Activated naive CD4-positive, alpha-beta T cell treated with anti-CD3 and anti-CD28 coated beads for 36 hours (primary cell): ENCODE measurements at regions of chr10 and their contacts with region 1.

Region 1: DNA sequence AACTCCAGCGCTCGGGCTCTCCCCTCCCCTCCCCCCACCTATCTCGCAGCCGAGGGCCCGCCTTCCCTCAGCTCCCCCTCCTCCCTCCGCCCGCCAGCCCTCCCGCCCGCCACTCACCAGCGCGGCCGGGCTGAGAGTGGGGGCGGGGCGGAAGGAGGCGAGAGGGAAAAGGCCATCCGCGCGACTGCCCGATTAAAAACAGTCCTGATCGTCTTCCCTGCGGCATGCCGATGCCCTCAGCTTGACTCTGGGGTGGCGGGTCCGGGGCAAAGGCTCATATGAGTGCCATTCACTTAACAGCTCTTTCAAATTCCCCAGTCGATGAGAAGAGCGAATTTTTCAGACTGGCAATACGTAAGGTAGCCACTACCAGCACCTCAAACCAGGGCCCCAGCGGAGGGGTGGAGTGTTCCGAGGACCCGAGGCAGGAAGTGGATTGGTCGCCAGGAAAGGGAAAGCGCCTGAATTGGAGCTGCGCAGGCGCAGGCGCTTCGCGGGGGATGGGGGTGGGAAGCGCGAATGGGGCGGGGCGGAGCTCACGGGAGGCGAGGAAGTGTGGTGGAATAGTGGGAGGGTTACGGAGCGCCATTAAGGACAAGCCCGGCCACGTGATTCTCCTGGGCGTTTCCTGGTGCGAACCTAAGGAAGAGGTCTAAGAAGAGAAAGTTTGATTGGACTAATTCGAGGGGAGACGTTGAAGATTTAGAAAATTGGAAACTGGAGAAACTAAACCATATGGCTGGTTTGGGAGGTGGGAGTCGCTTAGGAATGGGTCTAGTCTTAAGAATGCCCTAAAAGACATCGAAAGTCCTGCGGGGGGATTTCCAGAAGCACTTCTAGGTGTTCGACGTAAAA is at the start of gene UPF2:
- DNase-seq: peak; percentile 98
- H3K4me3 Mint-ChIP-seq: peak within 1 kb of the TSS; percentile 98
- H3K27ac Mint-ChIP-seq: peak within 1 kb of the TSS; percentile 99
- H3K4me1 Mint-ChIP-seq: peaks cover 33% of the 10 kb centered on the region
- H3K27me3 Mint-ChIP-seq: no peaks in the 10 kb centered on the region
- total RNA-seq, gene UPF2: 27.5 to 29.5 TPM

Region 2: DNA sequence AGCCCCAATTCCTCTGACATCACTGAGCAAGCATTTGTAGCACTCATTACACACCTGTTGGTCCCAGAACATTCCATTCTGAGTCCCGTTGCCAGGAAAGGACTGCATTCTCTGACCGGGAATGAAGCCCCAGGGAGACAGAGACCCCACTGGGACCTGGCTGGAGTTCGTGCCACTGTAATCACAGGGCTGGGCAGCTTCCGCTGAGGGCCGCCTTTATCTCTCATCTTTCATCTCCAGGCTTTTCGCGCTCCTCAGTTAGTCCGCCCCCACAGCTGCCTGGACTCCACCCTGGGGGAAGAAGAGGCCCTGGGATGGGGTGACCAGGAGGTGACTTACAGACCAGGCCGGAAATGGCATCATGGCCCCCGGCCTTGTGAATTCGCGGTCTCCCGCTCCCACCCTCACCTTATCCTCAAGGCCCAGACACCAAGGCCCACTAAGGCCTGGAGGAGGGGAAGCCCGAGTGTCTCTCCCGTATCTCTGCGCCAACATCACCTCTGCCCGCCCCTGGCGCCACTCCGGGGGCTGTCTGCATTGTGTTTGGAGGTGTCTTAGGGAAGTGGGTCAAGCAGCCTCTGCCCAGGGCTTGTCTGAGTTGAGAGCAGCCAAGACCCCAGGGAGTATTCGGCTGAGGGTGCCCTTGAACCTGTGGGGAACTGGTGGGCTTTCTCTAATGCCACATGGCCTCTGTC is 144.5 kb before region 1 on chr10:
- CTCF ChIA-PET with region 1: no interaction called
- intact Hi-C with region 1: no loop called
- DNase-seq: no peak
- H3K4me3 Mint-ChIP-seq: no peak overlapping the region
- H3K27ac Mint-ChIP-seq: no peak overlapping the region
- H3K4me1 Mint-ChIP-seq: no peaks in the 10 kb centered on the region
- H3K27me3 Mint-ChIP-seq: no peaks in the 10 kb centered on the region

Region 3: DNA sequence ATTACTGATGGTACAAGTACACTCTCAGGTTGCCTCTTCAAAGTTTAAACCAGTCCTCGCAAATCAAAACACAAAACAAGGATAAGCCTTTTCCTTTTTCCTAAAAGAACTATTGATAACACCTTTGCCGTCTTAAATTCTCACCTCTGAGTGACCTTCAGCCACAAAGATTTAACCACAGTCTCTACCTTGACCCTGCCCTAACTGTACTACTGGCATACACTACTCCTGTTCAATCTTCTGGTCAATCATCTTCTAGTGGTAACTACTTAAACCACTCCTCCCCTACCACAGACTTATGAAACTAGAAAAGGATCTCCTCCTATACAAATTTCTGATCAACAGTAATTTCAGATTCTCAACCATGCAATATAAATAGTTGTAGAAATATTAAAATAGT is 15.5 kb before region 1 on chr10:
- CTCF ChIA-PET with region 1: interaction called, 5 read pairs
- intact Hi-C with region 1: loop called (anchors 2 kb)
- DNase-seq: no peak
- H3K4me3 Mint-ChIP-seq: no peak overlapping the region
- H3K27ac Mint-ChIP-seq: no peak overlapping the region
- H3K4me1 Mint-ChIP-seq: peaks cover 47% of the 10 kb centered on the region
- H3K27me3 Mint-ChIP-seq: no peaks in the 10 kb centered on the region

Region 4: GRCh38 chr10:12107781-12108180 is 64.8 kb after region 1 on chr10:
- CTCF ChIA-PET with region 1: interaction called, 3 read pairs
- intact Hi-C with region 1: loop called (anchors 1 kb)
- DNase-seq: no peak
- H3K4me3 Mint-ChIP-seq: no peak overlapping the region
- H3K27ac Mint-ChIP-seq: no peak overlapping the region
- H3K4me1 Mint-ChIP-seq: peaks cover 20% of the 10 kb centered on the region
- H3K27me3 Mint-ChIP-seq: no peaks in the 10 kb centered on the region

Region 5: DNA sequence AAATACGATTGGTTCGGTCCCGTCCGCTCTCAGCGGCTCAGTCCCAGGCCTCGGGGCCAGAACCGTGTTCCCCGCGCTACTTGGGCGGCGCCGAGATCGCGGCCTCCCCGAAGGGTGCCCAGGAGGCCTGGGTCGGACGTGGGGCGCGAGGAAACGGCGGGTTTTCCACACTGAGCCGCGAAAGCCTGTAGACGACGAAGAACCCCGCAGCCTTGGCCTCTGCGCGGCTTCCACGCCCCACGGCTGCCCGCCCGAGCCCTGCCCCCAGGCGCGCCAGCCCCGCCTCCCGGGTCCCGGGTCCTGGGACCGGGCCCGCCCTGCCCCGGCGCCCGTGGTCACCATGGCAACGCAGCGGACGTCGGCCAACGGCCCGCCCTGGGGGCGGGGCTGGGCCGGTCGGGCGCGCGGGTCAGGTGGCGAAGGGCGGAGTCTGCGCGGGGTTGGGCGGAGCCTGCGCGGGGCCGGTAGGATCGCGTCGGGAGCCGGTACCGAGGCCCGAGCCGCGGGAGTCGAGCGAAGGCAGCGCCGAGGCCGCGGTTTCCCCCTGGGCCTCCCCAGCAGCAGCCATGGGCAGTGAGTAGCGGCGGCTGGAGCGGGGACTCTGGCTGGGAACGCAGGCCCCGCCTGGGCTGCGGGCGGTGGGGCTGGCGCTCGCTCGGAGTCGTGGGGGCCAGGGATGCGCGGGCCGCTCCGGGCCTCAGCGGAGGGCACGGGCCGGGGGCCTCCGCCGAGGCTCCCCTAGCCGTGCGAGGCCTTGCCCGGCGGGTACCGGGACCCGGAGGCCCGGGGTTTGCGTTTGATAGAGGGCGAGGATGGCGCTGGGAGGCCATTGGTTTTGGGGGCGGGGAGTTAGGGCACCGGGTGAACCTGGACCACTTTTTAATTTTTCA is 86.4 kb after region 1 on chr10 and contains the start of gene SEC61A2:
- CTCF ChIA-PET with region 1: no interaction called
- intact Hi-C with region 1: loop called (anchors 1 kb)
- DNase-seq: peak; percentile 97
- H3K4me3 Mint-ChIP-seq: peak within 1 kb of the TSS; percentile 83
- H3K27ac Mint-ChIP-seq: peak within 1 kb of the TSS; percentile 76
- H3K4me1 Mint-ChIP-seq: peaks cover 33% of the 10 kb centered on the region
- H3K27me3 Mint-ChIP-seq: no peaks in the 10 kb centered on the region
- total RNA-seq, gene SEC61A2: 18.2 to 20.0 TPM

Region 6: DNA sequence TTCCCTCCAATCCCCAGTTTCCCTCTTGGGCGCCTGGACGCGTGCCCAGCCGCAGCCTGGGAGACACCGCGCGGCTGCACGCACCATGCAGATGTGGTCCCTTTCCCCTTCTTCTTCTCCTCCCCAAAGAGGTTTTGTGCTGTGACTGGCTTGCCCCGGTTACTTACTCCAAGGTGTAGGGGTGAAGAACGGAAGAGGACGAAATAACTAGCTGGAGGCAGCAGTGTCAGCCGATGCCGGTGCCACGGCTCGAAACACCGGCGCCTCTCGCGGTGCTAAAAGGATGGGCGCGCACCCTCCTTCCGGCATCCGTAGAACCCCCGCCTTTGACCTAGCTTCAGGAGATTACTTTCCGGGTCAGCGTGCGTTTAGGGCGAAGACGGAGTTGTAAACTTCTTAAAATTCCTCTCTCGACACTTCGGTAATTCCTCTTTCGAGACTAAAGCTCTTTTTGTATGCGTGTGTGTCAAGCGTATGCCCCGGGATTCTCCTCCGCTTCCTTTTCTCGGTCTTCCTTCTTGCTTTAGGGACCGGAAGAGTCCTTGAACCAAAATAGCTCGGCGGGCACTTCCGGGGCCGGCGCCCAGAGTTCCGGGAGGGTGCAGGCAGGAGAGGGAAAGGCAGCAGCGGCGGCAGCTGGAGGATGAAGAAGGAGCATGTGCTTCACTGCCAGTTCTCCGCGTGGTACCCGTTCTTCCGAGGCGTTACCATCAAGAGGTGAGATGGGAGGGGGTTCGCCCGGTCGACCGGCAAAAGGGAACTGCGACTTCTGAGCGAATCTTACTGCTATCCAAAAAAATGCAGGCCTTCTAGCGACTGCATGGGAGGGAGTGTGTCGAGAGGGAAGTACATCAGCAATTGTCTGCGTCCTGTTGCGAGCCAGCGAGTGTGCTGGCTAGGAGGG is 152.8 kb after region 1 on chr10 and contains the starts of genes CDC123 and NUDT5:
- CTCF ChIA-PET with region 1: interaction called, 4 read pairs
- intact Hi-C with region 1: loop called (anchors 1 kb)
- DNase-seq: peak; percentile 93
- H3K4me3 Mint-ChIP-seq: peak within 1 kb of the TSS; percentile 96
- H3K27ac Mint-ChIP-seq: peak within 1 kb of the TSS; percentile 98
- H3K4me1 Mint-ChIP-seq: peaks cover 58% of the 10 kb centered on the region
- H3K27me3 Mint-ChIP-seq: no peaks in the 10 kb centered on the region
- total RNA-seq, gene CDC123: 108 to 117 TPM
- total RNA-seq, gene NUDT5: 97.1 to 100 TPM